ENCODE measurements at regions of chr2 and their contacts with region 1.

Region 1: GRCh38 chr2:8681786-8682692 is at the start of gene ID2:
- DNase-seq: peak; percentile 100
- H3K4me3 Mint-ChIP-seq: peak within 1 kb of the TSS; percentile 98
- H3K27ac Mint-ChIP-seq: peak within 1 kb of the TSS; percentile 97
- H3K4me1 Mint-ChIP-seq: peaks cover 37% of the 10 kb centered on the region
- H3K27me3 Mint-ChIP-seq: peaks cover 13% of the 10 kb centered on the region
- total RNA-seq, gene ID2: 284 and 299 TPM in 2 replicates

Region 2: DNA sequence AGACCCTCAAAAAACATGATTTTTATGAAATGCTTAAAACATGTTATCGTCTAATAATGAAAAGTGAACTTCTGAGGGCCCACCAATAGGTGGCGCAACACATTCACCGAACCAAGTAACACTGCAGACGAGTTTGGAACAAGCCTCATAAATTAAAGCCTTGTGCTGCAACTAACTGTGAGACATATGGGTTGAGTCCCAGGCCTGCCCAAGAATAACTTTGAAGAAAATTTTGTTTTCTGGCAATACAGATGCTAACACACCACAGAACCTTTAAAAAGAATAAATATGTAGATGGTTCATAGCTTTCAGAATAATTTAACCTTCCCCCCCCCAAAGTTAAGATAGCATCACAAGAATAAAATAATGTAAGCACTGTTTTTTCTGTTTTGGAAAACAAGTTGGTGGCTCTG is 1479.0 kb before region 1 on chr2:
- intact Hi-C with region 1: loop called (anchors 1 kb)
- DNase-seq: peak; percentile 88
- H3K4me3 Mint-ChIP-seq: no peak overlapping the region
- H3K27ac Mint-ChIP-seq: no peak overlapping the region
- H3K4me1 Mint-ChIP-seq: peaks cover 3% of the 10 kb centered on the region
- H3K27me3 Mint-ChIP-seq: peaks cover 2% of the 10 kb centered on the region

Region 3: DNA sequence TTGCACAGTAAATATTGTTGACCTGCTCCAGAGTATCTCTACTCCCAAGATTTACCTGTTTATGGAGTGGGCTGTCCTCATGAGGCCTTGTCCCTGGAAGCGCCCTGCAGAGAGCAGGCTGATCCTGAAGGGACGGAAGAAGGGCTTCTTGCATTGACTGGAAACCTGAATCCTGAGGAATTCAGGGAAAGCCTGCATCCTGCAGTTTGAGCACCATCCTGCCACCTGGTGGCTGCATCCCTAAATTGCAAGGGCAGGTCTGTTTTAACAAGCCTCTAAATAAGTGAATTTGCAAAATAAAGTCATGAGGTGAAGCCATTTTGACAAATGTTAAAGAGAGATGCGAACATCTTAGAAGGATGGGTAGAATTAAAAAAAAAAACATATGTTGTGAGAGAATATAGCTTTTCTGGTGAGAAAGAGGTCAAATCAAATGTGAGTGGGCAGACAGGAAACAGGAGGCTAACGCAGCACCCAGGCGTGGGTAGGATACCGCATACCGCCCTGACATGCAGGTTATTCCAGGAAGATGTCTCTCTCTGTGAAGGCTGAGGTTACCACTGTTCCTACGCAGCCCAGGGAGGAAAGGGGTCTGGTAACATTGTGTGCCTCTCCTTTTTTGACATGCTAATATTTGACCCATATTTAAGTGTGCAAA is 1009.9 kb before region 1 on chr2:
- intact Hi-C with region 1: loop called (anchors 1 kb)
- DNase-seq: peak; percentile 85
- H3K4me3 Mint-ChIP-seq: peak overlapping the region; percentile 70
- H3K27ac Mint-ChIP-seq: peak overlapping the region; percentile 98
- H3K4me1 Mint-ChIP-seq: peaks cover 60% of the 10 kb centered on the region
- H3K27me3 Mint-ChIP-seq: no peaks in the 10 kb centered on the region

Region 4: GRCh38 chr2:7845332-7845731 is 836.7 kb before region 1 on chr2:
- intact Hi-C with region 1: loop called (anchors 5 kb)
- DNase-seq: peak; percentile 52
- H3K4me3 Mint-ChIP-seq: no peak overlapping the region
- H3K27ac Mint-ChIP-seq: peak overlapping the region; percentile 76
- H3K4me1 Mint-ChIP-seq: peaks cover 42% of the 10 kb centered on the region
- H3K27me3 Mint-ChIP-seq: no peaks in the 10 kb centered on the region

Region 5: GRCh38 chr2:8152392-8153257 is 529.4 kb before region 1 on chr2:
- intact Hi-C with region 1: loop called (anchors 1 kb)
- DNase-seq: peak; percentile 49
- H3K4me3 Mint-ChIP-seq: no peak overlapping the region
- H3K27ac Mint-ChIP-seq: peak overlapping the region; percentile 12
- H3K4me1 Mint-ChIP-seq: peaks cover 26% of the 10 kb centered on the region
- H3K27me3 Mint-ChIP-seq: no peaks in the 10 kb centered on the region

Region 6: GRCh38 chr2:8334866-8335325 is 347.1 kb before region 1 on chr2:
- intact Hi-C with region 1: loop called (anchors 5 kb)
- DNase-seq: no peak
- H3K4me3 Mint-ChIP-seq: no peak overlapping the region
- H3K27ac Mint-ChIP-seq: no peak overlapping the region
- H3K4me1 Mint-ChIP-seq: peaks cover 19% of the 10 kb centered on the region
- H3K27me3 Mint-ChIP-seq: peaks cover 11% of the 10 kb centered on the region

Region 7: DNA sequence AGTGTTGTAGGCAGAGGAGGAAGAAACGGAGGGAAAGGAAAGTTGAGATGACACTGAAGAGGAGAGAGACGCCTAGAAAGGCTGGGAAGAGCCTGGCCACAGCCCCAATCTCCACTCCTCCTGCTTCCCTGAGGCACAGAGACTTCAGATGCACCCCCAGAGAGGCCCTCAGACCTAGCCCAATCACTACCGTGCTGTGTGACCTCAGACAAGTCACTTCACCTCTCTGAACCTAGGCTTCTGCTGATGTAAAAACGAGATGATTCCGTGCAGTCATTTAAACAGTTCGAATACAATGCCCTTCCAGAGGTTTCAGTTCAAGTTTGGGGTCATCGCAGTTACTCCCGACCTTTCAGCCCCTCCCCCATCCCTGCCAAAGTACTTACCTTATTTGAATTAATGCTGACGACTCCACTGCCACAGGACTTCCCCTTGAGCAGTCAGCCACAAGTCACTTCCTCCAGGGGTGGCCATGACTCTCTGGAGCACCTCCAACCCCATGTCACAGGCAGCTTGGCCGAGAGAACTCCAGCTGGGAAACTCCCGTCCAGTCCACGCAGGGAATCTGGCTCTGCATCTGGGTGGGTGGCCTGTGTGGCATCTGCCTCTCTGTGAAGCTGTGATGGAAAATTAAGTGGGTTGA is 105.4 kb before region 1 on chr2:
- intact Hi-C with region 1: loop called (anchors 2 kb)
- DNase-seq: peak; percentile 74
- H3K4me3 Mint-ChIP-seq: peak overlapping the region; percentile 8
- H3K27ac Mint-ChIP-seq: peak overlapping the region; percentile 18
- H3K4me1 Mint-ChIP-seq: peaks cover 43% of the 10 kb centered on the region
- H3K27me3 Mint-ChIP-seq: peaks cover 4% of the 10 kb centered on the region

Measured in activated CD4-positive, alpha-beta T cell treated with anti-CD3 and anti-CD28 coated beads, Interleukin-2, amount 10 ng/mL, durations not matched to agents 24 days and 14 days (primary cell).